Activated naive CD8-positive, alpha-beta T cell treated with anti-CD3 and anti-CD28 coated beads, Interleukin-2, amount 10 ng/mL, durations not matched to agents 7 days and 5 days (primary cell): ENCODE measurements at regions of chr13 and their contacts with region 1.

Region 1: DNA sequence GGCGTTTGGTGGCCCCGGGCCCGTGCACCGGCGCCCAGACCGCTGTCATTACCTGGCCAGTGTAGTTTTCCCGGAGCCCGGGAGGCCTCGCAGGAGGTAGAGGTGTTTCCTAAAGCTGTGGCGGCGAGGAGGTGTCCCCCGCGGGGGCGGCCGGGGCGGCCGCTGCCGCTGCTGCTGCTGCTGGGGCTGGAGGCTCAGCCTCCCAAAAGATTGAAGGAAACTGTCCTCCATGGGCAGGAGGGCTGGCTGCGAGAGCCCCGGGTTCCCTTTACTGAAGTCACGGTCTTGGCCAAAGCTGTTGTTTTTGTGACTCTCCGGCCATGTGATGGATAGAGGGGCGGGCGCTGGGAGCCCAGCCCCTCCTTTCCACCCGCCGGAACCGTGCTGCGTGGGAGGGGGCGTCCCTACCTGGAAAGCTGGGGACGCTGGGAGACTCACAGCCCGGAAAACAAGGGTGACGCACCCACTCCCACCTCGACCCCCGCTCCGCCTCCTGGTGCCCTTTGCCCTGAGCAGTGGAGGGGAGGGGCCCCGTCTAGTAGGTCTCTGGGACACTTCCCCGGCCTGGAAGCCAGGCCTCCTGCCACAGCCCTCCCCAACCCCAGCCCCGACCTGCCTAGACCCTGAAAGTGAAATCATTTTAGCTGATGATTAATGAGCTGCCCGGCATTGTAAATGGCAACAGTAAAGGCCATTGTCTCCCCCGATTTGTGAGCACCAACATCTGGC is at the start of gene N4BP2L1:
- DNase-seq: peak; percentile 79
- ATAC-seq: peak; percentile 69
- H3K4me3 Mint-ChIP-seq: peak within 1 kb of the TSS; percentile 96
- H3K27ac Mint-ChIP-seq: peak within 1 kb of the TSS; percentile 97
- H3K4me1 Mint-ChIP-seq: peaks cover 46% of the 10 kb centered on the region
- H3K27me3 Mint-ChIP-seq: no peaks in the 10 kb centered on the region
- total RNA-seq, gene N4BP2L1: 48.4 to 53.0 TPM

Region 2: DNA sequence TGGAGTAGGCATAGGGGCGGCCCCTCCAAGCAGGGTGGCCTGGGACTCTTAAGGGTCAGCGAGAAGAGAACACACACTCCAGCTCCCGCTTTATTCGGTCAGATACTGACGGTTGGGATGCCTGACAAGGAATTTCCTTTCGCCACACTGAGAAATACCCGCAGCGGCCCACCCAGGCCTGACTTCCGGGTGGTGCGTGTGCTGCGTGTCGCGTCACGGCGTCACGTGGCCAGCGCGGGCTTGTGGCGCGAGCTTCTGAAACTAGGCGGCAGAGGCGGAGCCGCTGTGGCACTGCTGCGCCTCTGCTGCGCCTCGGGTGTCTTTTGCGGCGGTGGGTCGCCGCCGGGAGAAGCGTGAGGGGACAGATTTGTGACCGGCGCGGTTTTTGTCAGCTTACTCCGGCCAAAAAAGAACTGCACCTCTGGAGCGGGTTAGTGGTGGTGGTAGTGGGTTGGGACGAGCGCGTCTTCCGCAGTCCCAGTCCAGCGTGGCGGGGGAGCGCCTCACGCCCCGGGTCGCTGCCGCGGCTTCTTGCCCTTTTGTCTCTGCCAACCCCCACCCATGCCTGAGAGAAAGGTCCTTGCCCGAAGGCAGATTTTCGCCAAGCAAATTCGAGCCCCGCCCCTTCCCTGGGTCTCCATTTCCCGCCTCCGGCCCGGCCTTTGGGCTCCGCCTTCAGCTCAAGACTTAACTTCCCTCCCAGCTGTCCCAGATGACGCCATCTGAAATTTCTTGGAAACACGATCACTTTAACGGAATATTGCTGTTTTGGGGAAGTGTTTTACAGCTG is 112.6 kb before region 1 on chr13 and contains the starts of genes BRCA2 and ZAR1L:
- POLR2A ChIA-PET with region 1: interaction called, 60 read pairs
- DNase-seq: peak; percentile 90
- ATAC-seq: peak; percentile 94
- H3K4me3 Mint-ChIP-seq: peak within 1 kb of the TSS; percentile 94
- H3K27ac Mint-ChIP-seq: peak within 1 kb of the TSS; percentile 100
- H3K4me1 Mint-ChIP-seq: peaks cover 21% of the 10 kb centered on the region
- H3K27me3 Mint-ChIP-seq: no peaks in the 10 kb centered on the region
- total RNA-seq, gene BRCA2: 25.2 to 26.7 TPM
- total RNA-seq, gene ZAR1L: not detected

Region 3: DNA sequence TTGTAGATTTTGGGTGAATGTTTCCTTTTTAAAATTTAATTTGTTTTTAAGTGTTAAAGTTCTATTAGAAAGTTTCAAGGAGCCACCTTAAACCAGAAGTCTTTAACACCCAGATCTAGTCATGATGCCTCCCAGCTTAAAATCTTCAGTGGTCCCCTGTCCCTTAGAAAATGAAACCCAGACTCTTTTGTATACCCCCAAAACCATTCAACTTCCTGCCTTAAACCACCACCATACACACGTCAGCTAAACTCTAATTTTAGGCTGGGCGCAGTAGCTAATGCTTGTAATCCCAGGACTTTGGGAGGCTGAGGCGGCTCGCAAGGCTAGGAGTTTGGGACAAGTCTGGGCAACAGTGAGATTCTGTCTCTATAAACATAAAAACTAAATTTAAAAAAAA is 38.0 kb before region 1 on chr13:
- POLR2A ChIA-PET with region 1: interaction called, 25 read pairs
- DNase-seq: peak; percentile 36
- ATAC-seq: peak; percentile 90
- H3K4me3 Mint-ChIP-seq: peak overlapping the region; percentile 71
- H3K27ac Mint-ChIP-seq: peak overlapping the region; percentile 85
- H3K4me1 Mint-ChIP-seq: peaks cover 29% of the 10 kb centered on the region
- H3K27me3 Mint-ChIP-seq: no peaks in the 10 kb centered on the region

Region 4: DNA sequence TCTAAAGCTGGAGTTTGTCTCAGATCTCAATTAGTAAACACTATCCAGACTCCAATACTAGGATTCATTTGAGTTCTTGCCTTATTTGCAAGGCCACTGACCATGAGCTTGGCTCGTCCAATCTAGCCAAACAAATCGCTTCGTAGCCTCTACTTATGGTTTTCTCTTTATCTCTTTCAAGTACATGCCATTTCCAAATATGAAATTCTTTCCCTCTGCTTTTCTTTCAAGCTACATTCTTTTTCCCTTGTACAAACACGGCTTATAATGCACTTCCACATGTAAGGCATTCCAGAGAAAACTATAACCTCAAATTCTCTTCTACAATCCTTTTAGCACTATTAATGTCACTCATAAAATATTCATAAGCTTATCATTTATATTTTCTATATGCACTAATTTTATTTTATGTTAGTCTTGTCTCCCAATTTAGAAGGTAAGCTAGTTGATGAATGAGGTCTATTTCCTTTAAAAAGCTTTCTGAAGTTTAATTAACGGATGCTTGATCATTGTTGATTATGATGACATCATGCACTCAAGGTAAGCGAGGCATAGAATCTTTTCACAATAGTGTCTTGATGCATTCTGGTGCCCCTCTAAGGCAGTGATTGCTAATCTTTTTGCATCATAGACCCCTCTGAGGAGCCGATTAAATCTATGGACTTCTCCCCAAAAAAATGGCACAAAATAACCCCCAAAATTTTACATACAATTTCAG is 11.0 kb after region 1 on chr13:
- POLR2A ChIA-PET with region 1: interaction called, 15 read pairs
- DNase-seq: no peak
- ATAC-seq: no peak
- H3K4me3 Mint-ChIP-seq: no peak overlapping the region
- H3K27ac Mint-ChIP-seq: no peak overlapping the region
- H3K4me1 Mint-ChIP-seq: peaks cover 5% of the 10 kb centered on the region
- H3K27me3 Mint-ChIP-seq: no peaks in the 10 kb centered on the region

Region 5: DNA sequence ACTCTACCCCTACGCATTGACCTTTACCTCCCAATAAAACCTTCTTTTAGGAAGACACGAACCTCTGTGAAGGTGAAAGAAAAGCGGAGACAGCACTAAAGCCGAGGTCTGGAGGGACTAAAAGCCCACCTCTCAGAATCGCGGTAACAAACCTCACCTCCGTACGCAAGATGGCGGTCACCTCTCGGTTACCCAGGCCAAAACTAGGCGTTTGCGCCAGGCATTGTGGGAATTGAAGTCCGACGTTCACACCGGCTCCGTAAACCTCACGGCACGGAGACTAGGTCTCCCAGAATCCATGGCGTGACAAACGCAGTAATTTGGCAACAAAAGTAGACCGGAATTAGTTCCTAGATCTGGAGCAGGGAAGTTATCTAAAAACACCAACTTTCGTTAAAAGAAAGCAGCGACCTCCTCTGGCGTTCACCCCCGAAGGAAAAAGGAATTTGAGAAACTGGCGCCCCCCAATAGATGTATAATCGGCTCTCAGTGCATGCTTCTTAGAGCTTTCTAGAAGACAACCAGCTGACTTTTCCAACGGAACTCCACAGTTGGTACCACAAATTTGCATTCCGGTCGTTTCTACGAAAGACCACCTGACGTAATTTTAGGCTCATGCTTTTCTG is 110.7 kb after region 1 on chr13 and contains the start of gene N4BP2L2:
- POLR2A ChIA-PET with region 1: interaction called, 10 read pairs
- DNase-seq: peak; percentile 83
- ATAC-seq: peak; percentile 95
- H3K4me3 Mint-ChIP-seq: peak within 1 kb of the TSS; percentile 91
- H3K27ac Mint-ChIP-seq: peak within 1 kb of the TSS; percentile 97
- H3K4me1 Mint-ChIP-seq: peaks cover 37% of the 10 kb centered on the region
- H3K27me3 Mint-ChIP-seq: no peaks in the 10 kb centered on the region
- total RNA-seq, gene N4BP2L2: 160 to 180 TPM